OCI-LY7 (cell line): ENCODE measurements at regions of chr20 and their contacts with region 1.

Region 1: DNA sequence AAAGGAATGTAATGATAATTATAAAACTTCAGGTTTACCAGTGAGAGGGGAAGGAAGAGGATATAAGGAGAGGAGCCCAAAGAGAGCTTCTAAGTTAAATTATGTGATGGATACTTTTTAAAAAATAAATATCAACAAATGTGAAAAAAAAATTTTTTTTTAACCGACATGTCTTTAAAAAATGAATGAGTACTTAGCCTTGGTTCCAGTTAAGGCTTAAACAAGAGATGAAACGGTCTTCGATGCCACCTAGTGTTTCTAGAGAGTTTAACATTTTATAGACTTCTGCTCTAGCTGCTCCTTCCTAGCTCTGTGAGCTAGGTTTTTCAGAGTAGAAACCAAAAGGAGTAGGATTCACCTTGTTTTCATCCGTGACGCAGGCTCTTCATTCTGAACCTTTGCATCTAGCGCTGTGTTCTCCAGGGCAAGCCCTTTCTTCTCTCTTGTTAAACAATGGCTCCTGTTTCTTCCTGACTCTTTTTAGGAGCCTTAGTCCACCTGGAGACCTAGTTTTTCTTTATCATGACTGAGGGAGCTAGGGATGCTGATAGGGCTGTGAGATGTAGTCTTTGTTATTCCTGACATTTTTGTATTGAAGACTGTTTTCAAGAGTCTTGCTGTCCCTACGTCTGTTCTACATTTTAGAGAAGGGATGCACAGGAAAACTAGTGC is 42.4 kb upstream of the GNRH2 start:
- DNase-seq: peak; percentile 75
- H3K4me3 ChIP-seq: no peak overlapping the region
- H3K27ac ChIP-seq: no peak overlapping the region
- H3K4me1 ChIP-seq: no peaks in the 10 kb centered on the region
- CTCF ChIP-seq: peak; percentile 83

Region 2: DNA sequence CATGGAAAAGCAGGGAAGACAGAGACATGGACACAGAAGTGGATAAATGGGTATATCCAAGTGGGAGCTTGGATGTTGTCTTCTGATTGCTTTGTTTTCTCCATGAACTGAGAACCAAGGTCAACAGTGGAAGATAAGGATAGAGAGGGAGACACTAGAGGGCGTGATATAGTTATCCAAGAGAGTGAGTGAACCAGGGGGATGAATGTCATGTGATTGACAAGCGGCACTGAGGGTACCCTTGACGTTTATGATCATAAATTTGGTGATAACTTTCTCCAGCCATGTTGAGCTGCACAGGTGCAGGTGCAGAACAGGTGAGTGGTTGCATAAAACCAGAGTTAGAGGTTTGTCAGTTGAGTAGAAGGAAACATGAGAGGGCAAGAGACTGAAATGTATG is 287.7 kb before region 1 on chr20:
- CTCF ChIA-PET with region 1: no interaction called
- POLR2A ChIA-PET with region 1: no interaction called
- intact Hi-C with region 1: loop called (anchors 10 kb)
- DNase-seq: peak; percentile 30
- H3K4me3 ChIP-seq: no peak overlapping the region
- H3K27ac ChIP-seq: no peak overlapping the region
- H3K4me1 ChIP-seq: no peaks in the 10 kb centered on the region
- CTCF ChIP-seq: peak; percentile 72

Region 3: DNA sequence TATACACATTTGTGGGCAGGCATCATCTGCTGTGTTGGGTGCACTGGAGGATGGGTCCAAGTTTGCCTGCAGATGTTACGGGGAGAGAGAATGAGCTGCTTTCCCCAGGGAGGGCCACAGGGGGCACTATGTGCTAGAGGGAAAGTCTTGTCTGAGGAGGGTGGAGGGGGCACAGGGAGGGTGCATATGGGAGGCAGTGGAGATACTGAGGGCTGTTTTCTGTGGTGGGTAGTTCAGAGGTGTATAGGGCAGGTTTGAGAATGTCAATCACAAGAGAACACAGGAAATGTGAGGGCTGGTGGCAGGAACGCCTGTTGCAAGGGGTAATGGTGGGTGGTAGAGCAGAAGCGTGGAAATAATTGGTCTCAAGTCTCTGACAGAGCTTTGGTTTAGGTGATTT is 135.4 kb before region 1 on chr20:
- CTCF ChIA-PET with region 1: interaction called, 3 read pairs
- POLR2A ChIA-PET with region 1: no interaction called
- intact Hi-C with region 1: loop called (anchors 1 kb)
- DNase-seq: peak; percentile 18
- H3K4me3 ChIP-seq: no peak overlapping the region
- H3K27ac ChIP-seq: no peak overlapping the region
- H3K4me1 ChIP-seq: no peaks in the 10 kb centered on the region
- CTCF ChIP-seq: peak; percentile 64

Region 4: DNA sequence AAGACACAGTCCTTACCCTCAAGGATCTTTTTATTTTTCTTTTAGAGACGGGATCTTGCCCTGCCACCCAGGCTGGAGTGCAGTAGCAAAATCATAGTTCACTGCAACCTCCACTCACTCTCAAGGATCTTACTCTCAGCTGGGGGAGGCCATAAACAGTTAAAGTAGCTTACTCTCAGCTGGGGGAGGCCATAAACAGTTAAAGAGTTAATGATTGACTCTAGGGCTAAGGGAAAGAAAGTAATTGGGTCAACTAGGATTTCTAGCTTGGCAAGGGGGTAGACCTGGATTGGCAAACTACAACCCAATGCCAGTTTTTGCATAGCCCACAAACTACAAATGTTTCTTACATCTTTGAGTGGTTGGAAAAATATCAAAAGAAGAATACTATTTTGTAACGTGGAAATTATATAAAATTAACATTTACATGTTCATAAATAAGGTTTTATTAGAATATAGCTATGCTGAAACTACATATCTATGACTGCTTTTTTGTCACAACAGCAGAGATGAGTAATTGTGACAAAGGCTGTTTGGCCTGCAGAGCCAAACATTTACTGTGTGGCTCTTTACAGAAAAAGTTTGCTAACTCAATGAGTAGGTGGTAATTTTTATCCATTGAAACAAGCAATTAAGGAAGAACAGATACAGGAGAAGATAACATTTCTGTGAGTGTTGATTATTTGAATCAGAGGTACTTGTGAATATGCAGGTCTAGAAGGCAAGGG is 81.3 kb before region 1 on chr20:
- CTCF ChIA-PET with region 1: no interaction called
- POLR2A ChIA-PET with region 1: no interaction called
- intact Hi-C with region 1: loop called (anchors 5 kb)
- DNase-seq: no peak
- H3K4me3 ChIP-seq: no peak overlapping the region
- H3K27ac ChIP-seq: no peak overlapping the region
- H3K4me1 ChIP-seq: peaks cover 8% of the 10 kb centered on the region
- CTCF ChIP-seq: no peak